Left cardiac atrium (tissue), 4 donors: ENCODE measurements at regions of chr16 and their contacts with region 1.

Region 1: GRCh38 chr16:85086347-85087291 is 25.7 kb downstream of the CIBAR2 start:
- DNase-seq: peak; percentile 85
- ATAC-seq: peak; percentile 66 to 67

Region 2: DNA sequence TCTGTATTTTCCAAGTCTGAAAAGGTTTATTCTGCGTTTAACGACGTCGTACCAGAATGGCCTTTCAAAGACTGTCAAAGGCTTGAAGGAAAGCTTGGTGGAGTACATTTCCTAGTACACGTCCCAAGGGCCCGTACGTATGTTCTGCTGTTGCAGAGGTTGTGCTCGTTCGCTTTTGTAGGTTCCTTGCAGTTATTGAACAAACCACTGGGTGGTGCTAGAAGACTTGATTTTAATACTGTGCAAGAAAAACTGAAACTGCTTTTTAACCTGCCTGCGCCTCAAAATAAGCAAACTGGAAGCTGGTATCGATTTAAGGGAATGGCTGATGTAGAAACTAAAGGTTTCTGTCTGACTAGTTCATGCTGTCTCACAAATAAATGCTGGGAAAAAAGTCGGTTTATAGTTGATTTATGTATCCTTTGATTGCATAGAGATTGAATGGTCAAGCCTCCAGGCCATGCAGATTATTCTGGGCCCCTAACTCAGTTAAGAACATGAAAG is 332.2 kb before region 1 on chr16:
- intact Hi-C with region 1: loop called in 1 of 2 experiments (anchors 10 kb)
- DNase-seq: no peak
- ATAC-seq: peak; percentile 81 to 82

Region 3: GRCh38 chr16:85010931-85011845 is 75.4 kb before region 1 on chr16 and contains the start of gene ZDHHC7:
- intact Hi-C with region 1: loop called in 1 of 2 experiments (anchors 10 kb)
- DNase-seq: peak; percentile 93
- ATAC-seq: peak; percentile 97
- total RNA-seq, gene ZDHHC7: 33.2 to 35.2 TPM

Region 4: GRCh38 chr16:85126705-85127419 is 40.2 kb after region 1 on chr16:
- intact Hi-C with region 1: no loop called
- DNase-seq: peak; percentile 61
- ATAC-seq: peak; percentile 24 to 54

Region 5: DNA sequence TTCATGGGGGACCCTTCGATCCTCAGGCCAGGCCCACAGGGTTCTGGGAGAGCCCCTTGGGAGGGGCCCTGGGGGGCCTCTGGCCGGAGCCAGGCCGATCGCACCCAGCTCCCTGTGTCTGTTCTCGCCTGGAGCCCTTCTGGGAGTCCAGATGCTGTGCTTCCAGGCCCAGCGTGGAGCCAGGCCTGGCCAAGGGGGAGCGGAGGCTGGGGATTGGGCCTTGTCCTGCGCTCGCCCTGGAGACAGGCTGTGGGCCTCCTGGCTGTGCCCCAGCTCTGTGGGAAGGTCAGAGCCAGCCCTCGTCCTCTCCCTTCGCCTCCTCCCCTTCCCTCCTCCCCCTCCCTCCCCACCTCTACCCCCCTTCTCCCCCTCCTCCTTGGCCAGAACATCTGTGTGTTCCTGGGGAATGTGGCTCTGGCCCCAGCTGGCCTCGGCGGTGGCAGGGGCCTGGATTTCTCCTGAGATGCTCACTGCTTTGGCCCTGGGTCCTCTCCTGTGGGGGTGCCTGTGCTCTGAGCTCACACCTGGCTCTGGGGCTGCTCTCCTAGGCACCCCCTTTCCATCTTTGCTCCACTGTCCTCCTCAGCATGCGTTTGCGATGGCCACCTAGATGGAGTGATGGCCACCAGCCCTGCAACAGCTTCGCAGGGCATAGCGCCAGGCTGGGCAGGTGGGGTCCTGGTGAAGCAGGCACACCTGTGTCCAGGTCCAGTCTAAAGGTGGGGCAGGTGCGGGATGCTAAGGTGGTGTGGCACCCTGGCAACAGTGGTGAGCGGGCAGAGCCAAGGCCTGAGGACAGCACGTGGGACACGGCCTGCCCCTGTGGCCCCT is 116.2 kb after region 1 on chr16:
- intact Hi-C with region 1: no loop called
- DNase-seq: peak; percentile 85
- ATAC-seq: peak; percentile 83 to 86